ENCODE measurements at regions of chr20 and their contacts with region 1.

Region 1: GRCh38 chr20:45174434-45175364 is at the start of gene PI3:
- DNase-seq: peak; percentile 99
- ATAC-seq: peak; percentile 66
- H3K4me3 ChIP-seq: peak within 1 kb of the TSS; percentile 8; the same call in 1 of the 2 replicates
- H3K27ac ChIP-seq: peak within 1 kb of the TSS; percentile 93
- H3K4me1 ChIP-seq: peaks cover 60% of the 10 kb centered on the region
- H3K27me3 ChIP-seq: no peaks in the 10 kb centered on the region
- CTCF ChIP-seq: no peak
- total RNA-seq, gene PI3: 175 and 188 TPM in 2 replicates

Region 2: GRCh38 chr20:45157962-45158361 is 16.7 kb before region 1 on chr20:
- CTCF ChIA-PET with region 1: no interaction called
- POLR2A ChIA-PET with region 1: interaction called, 6 read pairs
- intact Hi-C with region 1: loop called (anchors 1 kb)
- DNase-seq: peak; percentile 96
- ATAC-seq: peak; percentile 92
- H3K4me3 ChIP-seq: peak overlapping the region; percentile 1; the same call in 1 of the 2 replicates
- H3K27ac ChIP-seq: peak overlapping the region; percentile 74
- H3K4me1 ChIP-seq: peaks cover 15% of the 10 kb centered on the region
- H3K27me3 ChIP-seq: no peaks in the 10 kb centered on the region
- CTCF ChIP-seq: no peak

Region 3: GRCh38 chr20:45283548-45284057 is 108.9 kb after region 1 on chr20:
- CTCF ChIA-PET with region 1: no interaction called
- POLR2A ChIA-PET with region 1: interaction called, 12 read pairs
- intact Hi-C with region 1: no loop called
- DNase-seq: peak; percentile 84
- ATAC-seq: peak; percentile 89
- H3K4me3 ChIP-seq: no peak overlapping the region
- H3K27ac ChIP-seq: peak overlapping the region; percentile 40
- H3K4me1 ChIP-seq: peaks cover 16% of the 10 kb centered on the region
- H3K27me3 ChIP-seq: no peaks in the 10 kb centered on the region
- CTCF ChIP-seq: no peak

Measured in PC-3 (cell line).